ENCODE measurements at regions of chr11 and their contacts with region 1.

Region 1: DNA sequence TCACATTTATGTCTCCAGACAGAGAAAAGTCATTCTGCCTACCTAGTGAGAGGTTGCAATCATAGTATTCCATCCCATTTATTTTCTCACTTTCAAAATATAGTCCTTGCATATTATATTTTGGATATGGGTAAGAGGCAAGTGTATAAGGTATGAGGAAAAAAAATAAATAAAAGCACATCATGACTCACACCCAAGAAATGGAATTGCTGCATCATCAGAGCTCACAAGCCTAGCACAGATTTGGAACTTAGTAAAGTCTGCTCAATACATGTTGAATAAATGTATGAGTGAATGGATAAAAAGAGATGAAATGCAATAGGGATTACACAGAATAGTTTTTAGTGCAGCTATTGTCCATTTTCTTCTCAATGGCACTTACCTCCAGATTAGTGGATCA is 2.5 kb upstream of the OR51G1 start:
- DNase-seq: no peak
- CTCF ChIP-seq: no peak

Region 2: DNA sequence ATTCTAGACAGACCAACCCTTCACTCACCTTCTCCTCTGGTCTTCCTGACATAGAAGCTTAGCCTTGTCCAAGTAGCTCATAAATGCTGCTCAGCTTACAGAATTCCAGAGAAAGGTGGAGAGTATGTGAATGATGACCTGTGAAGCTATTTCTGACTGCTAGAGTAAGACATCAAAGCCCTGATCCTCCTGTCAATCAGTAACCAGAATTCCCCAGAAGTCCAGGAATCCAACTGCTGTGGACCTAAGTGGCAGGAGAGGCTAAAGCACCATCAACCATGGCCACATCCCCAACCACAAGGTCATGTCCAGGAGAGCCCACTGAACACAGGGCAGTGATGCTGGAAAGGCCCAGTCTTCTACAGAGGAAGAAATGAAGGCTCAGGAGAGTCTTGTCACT is 10.0 kb before region 1 on chr11:
- CTCF ChIA-PET with region 1: interaction called, 11 read pairs
- POLR2A ChIA-PET with region 1: no interaction called
- DNase-seq: no peak
- CTCF ChIP-seq: no peak

Region 3: DNA sequence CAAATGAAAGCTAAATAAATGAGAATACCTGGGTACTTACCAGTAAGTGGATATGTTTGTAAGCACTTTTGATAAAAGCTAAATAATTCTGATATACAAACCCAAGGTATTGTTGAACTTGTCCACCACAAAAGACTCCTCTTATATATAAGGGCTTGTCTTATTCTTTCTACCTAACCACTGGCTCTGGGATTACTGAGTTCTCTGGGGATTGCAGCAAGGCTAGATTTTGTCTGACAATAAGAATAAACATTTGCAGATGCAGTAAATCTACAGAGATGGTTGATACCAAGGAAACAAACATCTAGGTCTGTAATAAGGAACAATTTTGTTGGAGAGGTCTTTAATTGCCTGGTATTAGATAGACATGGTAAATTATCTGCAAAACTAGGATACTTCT is 20.9 kb after region 1 on chr11 and contains the start of gene OR51A4:
- CTCF ChIA-PET with region 1: no interaction called
- POLR2A ChIA-PET with region 1: no interaction called
- DNase-seq: no peak
- CTCF ChIP-seq: no peak